ENCODE measurements at regions of chr17 and their contacts with region 1.

Region 1: DNA sequence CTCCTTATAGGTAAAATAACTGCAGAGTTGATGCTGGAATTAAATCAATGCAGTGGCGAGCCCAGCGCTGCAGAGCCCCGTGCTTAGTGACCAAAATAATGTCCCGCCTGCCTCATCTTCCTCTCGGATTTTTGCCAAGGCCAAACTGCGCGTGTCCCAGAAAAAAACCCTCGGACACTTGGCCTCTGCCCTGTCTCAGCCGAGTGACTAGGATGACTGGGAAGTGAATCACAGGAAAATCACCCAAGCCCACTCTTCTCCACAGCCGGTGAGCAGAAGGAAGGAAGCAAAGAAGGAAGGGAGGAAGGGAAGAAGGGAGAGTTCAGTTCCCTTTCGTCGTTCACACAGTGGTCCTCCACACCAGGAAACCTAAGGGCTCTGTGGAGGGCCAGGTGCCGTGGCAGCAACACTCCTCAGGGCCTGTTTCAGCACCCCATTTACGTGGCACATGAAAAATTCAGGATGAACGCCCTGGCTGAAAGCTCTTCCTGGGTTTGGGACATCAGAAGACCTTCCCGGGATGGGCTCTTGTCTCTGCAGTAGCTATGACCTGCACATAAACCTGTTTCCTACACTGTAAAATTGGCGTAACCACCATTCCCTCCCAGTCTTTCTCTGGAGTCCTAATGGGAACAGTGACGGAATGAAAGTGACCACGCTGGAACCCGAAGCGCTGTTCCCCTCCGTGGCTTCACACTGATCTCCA is 25.4 kb upstream of the HOXB13 start:
- DNase-seq: no peak
- H3K4me3 Mint-ChIP-seq: no peak overlapping the region
- H3K27ac Mint-ChIP-seq: no peak overlapping the region
- H3K4me1 Mint-ChIP-seq: peaks cover 9% of the 10 kb centered on the region
- H3K27me3 Mint-ChIP-seq: peaks cover 82% of the 10 kb centered on the region

Region 2: DNA sequence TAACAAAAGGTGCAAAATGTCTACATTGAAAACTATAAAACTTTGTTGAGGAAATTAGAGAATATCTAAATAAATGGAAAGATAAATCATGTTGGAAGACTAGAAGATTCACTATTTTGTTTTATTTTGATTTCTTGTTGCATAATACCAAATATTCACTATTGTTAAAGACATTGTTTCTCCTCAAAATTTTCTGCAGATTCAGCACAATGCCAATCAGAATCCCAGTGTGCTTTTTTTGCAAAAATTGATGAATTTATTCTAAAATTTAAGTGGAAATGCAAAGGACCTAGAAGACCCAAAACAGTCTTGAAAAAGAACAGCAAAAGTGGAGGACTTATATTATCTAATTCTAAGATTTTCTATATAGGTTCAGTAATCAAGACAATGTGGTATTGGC is 22.7 kb after region 1 on chr17:
- CTCF ChIA-PET with region 1: no interaction called
- intact Hi-C with region 1: no loop called
- DNase-seq: no peak
- H3K4me3 Mint-ChIP-seq: no peak overlapping the region
- H3K27ac Mint-ChIP-seq: no peak overlapping the region
- H3K4me1 Mint-ChIP-seq: no peaks in the 10 kb centered on the region
- H3K27me3 Mint-ChIP-seq: peaks cover 12% of the 10 kb centered on the region

Region 3: DNA sequence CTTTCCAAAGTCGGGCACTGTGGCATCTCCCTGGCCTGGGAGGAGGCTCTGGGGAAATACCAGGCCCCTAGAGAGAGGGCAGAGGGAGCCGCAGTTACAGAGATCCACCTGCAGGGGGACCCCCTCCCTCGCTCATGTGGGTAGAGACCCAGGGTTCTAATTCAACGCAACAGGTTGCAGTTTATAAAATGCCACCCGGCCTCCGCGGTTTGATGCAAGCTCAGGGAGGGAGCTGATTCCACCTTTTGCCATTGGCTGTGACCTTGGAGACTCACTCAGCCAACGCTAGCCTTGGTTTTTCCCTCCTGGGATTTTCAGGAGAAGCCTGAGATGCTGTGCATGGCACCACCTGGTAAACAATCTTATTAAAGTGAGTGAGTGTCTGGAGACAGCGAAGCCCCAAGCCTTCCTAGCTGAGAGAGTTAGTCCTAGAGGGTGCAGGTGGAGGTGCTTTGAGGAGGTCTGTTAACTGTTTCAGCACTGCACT is 51.0 kb after region 1 on chr17:
- CTCF ChIA-PET with region 1: no interaction called
- intact Hi-C with region 1: no loop called
- DNase-seq: peak; percentile 78
- H3K4me3 Mint-ChIP-seq: no peak overlapping the region
- H3K27ac Mint-ChIP-seq: no peak overlapping the region
- H3K4me1 Mint-ChIP-seq: no peaks in the 10 kb centered on the region
- H3K27me3 Mint-ChIP-seq: peaks cover 5% of the 10 kb centered on the region

Region 4: GRCh38 chr17:49003623-49004511 is 249.9 kb after region 1 on chr17:
- CTCF ChIA-PET with region 1: no interaction called
- intact Hi-C with region 1: loop called (anchors 5 kb)
- DNase-seq: no peak
- H3K4me3 Mint-ChIP-seq: no peak overlapping the region
- H3K27ac Mint-ChIP-seq: no peak overlapping the region
- H3K4me1 Mint-ChIP-seq: peaks cover 4% of the 10 kb centered on the region
- H3K27me3 Mint-ChIP-seq: peaks cover 77% of the 10 kb centered on the region

Measured in activated naive CD4-positive, alpha-beta T cell treated with anti-CD3 and anti-CD28 coated beads for 36 hours (primary cell).